A549 (cell line): ENCODE measurements at regions of chr19 and their contacts with region 1.

Region 1: GRCh38 chr19:55503502-55504251 is 15.4 kb downstream of the SSC5D start:
- DNase-seq: peak; percentile 95 to 96
- ATAC-seq: peak; percentile 82 to 92
- H3K4me3 ChIP-seq: peak overlapping the region; percentile 31
- H3K27ac ChIP-seq: peak overlapping the region; percentile 50 to 75; a peak in 4 of 6 replicates
- H3K4me1 ChIP-seq: no peaks in the 10 kb centered on the region
- CTCF ChIP-seq: peak; percentile 95
- EP300 ChIP-seq: no peak
- POLR2A ChIP-seq: no peak
- RAD21 ChIP-seq: peak; percentile 93 to 94

Region 2: DNA sequence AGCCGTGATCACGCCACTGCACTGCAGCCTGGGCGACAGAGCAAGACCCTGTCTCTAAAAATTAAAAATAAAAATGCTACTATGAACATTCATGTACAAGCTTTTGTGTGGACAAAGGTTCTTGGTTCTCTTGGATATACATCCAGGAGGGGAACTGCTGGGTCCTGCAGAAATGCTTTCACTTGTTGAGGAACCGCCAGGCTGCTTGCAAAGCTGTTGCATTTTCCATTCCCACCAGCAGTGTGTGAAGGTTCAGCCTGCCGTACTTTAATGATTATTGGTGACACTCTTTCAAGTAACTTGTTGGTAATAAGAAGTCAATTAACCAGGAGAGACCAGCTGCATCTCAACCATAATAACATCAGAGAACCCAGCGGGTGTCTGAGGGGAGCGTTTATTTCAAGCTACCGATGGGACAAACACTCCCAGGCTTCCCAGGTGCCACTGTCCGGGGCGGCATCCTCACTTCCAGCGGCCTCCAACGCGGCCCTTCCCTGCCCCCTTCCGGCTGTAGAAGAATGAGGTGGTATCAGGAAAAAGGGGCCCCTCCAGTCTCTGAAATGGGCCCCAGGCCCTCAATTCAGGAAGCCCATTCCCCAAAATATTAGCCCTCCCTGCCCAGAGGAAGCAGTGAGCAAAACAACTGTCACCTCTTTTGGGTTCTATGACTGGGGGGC is 371.1 kb before region 1 on chr19:
- CTCF ChIA-PET with region 1: interaction called, 14 read pairs
- POLR2A ChIA-PET with region 1: no interaction called
- DNase-seq: no peak
- ATAC-seq: no peak
- H3K4me3 ChIP-seq: no peak overlapping the region
- H3K27ac ChIP-seq: no peak overlapping the region
- H3K4me1 ChIP-seq: no peaks in the 10 kb centered on the region
- CTCF ChIP-seq: no peak
- EP300 ChIP-seq: no peak
- POLR2A ChIP-seq: no peak
- RAD21 ChIP-seq: no peak

Region 3: GRCh38 chr19:55437410-55438075 is 66.1 kb before region 1 on chr19:
- CTCF ChIA-PET with region 1: interaction called, 10 read pairs
- POLR2A ChIA-PET with region 1: no interaction called
- DNase-seq: peak; percentile 87 to 89
- ATAC-seq: peak; percentile 72 to 90
- H3K4me3 ChIP-seq: no peak overlapping the region
- H3K27ac ChIP-seq: no peak overlapping the region
- H3K4me1 ChIP-seq: peaks cover 12% of the 10 kb centered on the region
- CTCF ChIP-seq: no peak
- EP300 ChIP-seq: no peak
- POLR2A ChIP-seq: no peak
- RAD21 ChIP-seq: no peak

Region 4: DNA sequence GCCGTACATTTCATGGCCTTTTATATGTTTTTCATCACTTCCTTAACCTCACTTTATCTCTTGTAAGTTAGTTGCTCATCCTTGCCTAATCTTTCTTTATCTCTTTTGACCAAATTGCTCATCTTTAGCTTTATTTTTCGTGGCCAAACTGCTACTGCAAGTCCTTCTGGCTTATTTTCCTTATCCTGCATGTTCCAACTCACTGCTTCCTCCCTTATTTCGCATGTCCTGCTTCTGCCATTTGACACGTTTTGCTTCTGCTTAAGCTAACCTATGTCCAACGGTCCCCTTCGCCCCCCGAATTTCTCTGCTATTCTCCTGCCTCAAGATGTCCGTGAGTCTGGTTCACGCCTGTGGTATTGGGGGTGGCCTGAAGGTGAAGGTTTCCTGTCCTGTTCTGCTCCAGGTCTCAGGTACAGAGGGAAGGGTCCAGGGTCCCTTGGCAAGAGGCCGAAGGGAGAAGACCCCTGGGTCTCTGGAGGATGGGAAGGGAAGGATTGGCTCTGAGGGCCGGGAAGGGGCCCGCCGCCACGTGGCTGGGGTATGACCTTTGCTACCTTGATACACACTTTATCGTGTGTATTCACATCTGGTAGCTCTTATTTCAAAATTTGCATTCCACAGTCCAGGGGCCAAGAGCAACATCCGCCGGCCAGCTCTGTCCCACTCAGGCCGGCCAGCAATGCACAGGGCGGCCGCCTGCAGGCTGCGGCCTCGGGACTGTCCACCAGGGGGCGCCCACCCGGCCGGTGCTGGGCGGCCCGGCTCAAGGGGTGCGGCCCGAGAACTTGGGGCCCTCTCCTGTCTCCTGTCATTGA is 36.2 kb before region 1 on chr19:
- CTCF ChIA-PET with region 1: interaction called, 194 read pairs
- POLR2A ChIA-PET with region 1: interaction called, 4 read pairs
- DNase-seq: peak; percentile 48 to 73
- ATAC-seq: peak; percentile 75 to 93
- H3K4me3 ChIP-seq: no peak overlapping the region
- H3K27ac ChIP-seq: peak overlapping the region; percentile 6 to 35; a peak in 3 of 6 replicates
- H3K4me1 ChIP-seq: peaks cover 6% of the 10 kb centered on the region; the same call in 2 of the 3 replicates
- CTCF ChIP-seq: peak; percentile 99
- EP300 ChIP-seq: no peak
- POLR2A ChIP-seq: no peak
- RAD21 ChIP-seq: peak; percentile 57 to 73

Region 5: DNA sequence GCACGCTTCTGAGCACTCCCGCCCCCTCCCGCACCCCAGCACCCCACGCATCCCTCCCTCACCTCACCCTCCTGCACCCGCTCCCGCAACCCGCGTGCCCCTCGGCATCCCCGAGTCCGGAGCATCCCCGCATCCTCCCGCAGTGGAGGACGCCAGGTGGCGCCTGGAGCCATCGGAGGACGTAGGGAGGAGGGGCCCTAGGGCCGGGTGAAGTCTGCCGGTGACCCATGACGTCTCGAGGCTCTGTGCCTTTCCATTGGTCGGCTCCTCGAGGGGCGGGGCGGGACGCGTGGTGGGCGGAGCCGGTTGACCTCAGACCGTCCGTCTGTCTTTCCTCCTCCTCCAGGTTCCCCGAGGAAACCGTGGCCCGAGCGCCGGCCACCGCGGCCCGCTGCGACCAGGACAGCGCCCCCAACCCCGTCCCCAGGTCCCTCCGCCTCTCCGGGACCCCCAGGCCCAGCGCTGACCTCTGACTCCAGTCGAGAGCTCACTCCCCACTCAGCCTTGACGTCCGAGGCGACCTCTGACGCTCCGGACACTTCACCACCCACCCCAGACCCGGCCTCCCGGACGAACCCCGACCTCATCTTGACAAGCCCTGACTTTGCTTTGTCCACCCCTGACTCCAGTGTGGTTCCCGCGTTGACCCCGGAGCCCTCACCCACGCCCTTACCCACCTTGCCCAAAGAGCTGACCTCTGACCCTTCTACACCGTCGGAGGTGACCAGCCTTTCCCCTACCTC is 13.4 kb after region 1 on chr19:
- CTCF ChIA-PET with region 1: interaction called, 83 read pairs
- POLR2A ChIA-PET with region 1: no interaction called
- DNase-seq: peak; percentile 97 to 100
- ATAC-seq: peak; percentile 90 to 95
- H3K4me3 ChIP-seq: peak overlapping the region; percentile 35
- H3K27ac ChIP-seq: peak overlapping the region; percentile 78 to 88
- H3K4me1 ChIP-seq: peaks cover 21% of the 10 kb centered on the region
- CTCF ChIP-seq: peak; percentile 97
- EP300 ChIP-seq: no peak
- POLR2A ChIP-seq: peak; percentile 27; the same call in 1 of the 2 replicates
- RAD21 ChIP-seq: peak; percentile 100